ENCODE measurements at regions of chr4 and their contacts with region 1.

Region 1: DNA sequence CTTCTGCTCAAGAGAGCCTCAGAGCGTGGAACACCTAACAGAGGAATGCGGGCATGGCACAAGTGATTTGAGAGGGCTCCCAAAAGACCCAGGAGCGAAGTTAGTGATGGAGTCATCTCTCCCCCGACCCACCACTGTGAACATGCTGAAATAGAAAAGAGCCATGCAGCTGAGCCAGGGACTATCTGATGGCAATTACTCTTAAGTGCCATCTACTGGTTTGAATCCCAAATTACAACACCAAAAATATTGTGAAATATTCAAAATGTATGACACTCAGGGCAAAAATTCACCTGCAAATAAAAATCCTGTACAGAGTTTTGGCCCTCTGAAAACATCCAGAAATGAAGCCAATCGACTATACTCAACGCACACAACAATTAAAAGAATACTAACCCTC is 2038.9 kb upstream of the ADGRL3 start:
- DNase-seq: no peak
- ATAC-seq: no peak
- H3K4me3 ChIP-seq: no peak overlapping the region
- H3K27ac ChIP-seq: no peak overlapping the region
- H3K4me1 ChIP-seq: no peaks in the 10 kb centered on the region
- H3K27me3 ChIP-seq: no peaks in the 10 kb centered on the region
- CTCF ChIP-seq: no peak
- EP300 ChIP-seq: no peak
- POLR2A ChIP-seq: no peak
- RAD21 ChIP-seq: no peak

Region 2: DNA sequence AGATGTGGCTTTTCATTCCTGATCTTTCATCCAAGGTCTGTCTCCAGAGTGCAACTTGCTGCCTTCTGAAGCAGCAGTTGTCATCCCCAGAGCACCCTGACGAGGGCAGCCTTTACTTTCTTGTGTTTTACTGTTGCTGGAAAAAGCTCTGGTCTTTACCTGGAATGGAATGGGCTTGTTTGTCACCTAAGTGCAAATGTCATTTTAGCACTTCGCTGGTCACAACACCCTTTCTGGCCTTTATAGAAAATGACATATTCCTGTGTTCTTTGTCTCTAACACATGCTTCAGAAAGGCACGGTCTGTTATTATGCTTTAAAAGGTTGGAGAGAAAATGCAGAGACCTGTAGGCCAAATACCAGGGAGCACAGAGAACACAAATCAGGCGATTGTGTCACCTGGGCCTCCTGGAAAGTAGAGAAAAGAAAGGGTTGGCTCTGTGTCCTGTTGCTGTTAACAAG is 1718.4 kb before region 1 on chr4:
- CTCF ChIA-PET with region 1: no interaction called
- POLR2A ChIA-PET with region 1: no interaction called
- in situ Hi-C with region 1: no loop called
- intact Hi-C with region 1: loop called (anchors 5 kb)
- DNase-seq: peak; percentile 26
- ATAC-seq: peak; percentile 91
- H3K4me3 ChIP-seq: no peak overlapping the region
- H3K27ac ChIP-seq: no peak overlapping the region
- H3K4me1 ChIP-seq: no peaks in the 10 kb centered on the region
- H3K27me3 ChIP-seq: no peaks in the 10 kb centered on the region; a peak in 1 of 5 replicates
- CTCF ChIP-seq: peak; percentile 86
- EP300 ChIP-seq: no peak
- POLR2A ChIP-seq: no peak
- RAD21 ChIP-seq: peak; percentile 67

Region 3: DNA sequence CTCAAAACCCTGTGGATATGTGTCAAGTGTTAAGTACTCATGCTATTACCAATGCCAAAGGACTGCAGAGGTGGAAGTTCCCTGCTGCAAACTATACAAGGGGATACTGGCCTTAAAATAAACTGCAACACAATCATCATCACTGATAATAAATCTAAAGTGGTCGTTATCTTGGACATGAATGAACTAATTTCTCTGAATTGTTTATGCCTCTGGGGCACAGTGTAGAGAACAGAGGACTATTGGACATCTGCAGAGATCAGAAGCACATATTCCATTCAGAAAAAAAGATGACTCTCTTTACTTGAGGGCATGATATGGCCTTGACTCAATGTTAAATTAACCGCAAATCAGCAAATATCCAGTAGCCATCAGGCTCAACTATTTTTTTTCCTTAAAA is 1508.5 kb before region 1 on chr4:
- CTCF ChIA-PET with region 1: no interaction called
- POLR2A ChIA-PET with region 1: no interaction called
- in situ Hi-C with region 1: no loop called
- intact Hi-C with region 1: loop called (anchors 5 kb)
- DNase-seq: no peak
- ATAC-seq: no peak
- H3K4me3 ChIP-seq: no peak overlapping the region
- H3K27ac ChIP-seq: no peak overlapping the region
- H3K4me1 ChIP-seq: no peaks in the 10 kb centered on the region
- H3K27me3 ChIP-seq: no peaks in the 10 kb centered on the region
- CTCF ChIP-seq: no peak
- EP300 ChIP-seq: no peak
- POLR2A ChIP-seq: no peak
- RAD21 ChIP-seq: no peak

Measured in HepG2 (cell line).